H1 (cell line): ENCODE measurements at regions of chr5 and their contacts with region 1.

Region 1: DNA sequence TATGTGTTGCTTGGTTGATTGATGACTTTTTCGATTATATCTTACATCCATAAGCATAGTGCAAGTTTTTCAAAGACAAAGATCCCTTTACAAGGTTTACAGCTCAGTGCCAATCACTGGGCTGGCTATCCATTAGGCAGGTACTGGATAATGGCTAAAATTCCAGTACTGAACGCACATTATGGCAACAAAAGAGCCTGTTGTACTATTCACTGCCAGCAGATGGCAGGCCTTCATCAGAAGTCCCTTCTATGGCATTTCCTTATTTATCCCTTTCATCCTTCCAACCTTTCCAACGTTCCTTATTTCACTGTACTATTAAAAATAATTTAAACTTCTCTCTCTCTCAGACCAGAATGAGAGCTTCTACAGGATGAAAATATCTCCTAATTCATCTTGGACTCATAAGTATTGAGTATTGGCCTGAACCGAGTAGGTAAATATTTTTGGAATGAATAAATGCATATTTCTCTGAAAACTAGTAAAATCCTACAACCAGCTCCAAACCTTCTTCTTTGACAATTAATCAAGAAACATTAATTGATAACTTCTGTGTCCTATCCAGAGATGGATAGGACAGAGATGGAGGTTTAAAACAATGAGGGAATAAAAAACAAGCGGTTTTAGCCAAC is 6.7 kb upstream of the WNT8A start:
- DNase-seq: peak in 1 of 2 experiments; percentile 82
- H3K4me3 ChIP-seq: no peak overlapping the region
- H3K27ac ChIP-seq: no peak overlapping the region
- H3K4me1 ChIP-seq: peaks cover 4 to 10% (median 8%) of the 10 kb centered on the region in 4 experiments; a peak in 4 of 7 replicates
- H3K27me3 ChIP-seq: peaks cover 0 to 2% (median 0%) of the 10 kb centered on the region in 4 experiments; a peak in 1 of 7 replicates
- CTCF ChIP-seq: peak in 2 of 3 experiments; percentile 85 to 87; a peak in 3 of 4 replicates
- EP300 ChIP-seq: no peak; a peak in 1 of 3 replicates
- POLR2A ChIP-seq: no peak
- RAD21 ChIP-seq: peak; percentile 96

Region 2: DNA sequence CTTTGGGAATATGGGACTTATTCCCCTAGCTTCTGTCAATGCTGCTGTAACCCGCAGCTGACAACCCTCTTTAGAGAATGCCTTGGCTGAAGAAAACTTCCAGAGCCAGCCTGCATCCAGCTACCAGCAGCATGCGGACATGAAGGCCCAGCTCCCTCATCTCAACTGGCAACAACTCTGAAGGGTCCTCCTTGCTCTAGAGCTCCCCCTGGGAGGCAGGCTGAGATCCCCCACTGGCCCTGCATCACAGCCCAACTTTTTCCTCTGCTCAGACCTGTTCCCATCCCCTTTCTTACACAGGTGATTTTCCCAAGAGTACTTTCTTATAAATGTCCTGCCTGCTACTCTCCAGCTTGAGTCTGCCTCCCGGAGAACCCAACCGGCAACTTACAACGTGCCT is 12.1 kb before region 1 on chr5:
- CTCF ChIA-PET with region 1: interaction called, 144 read pairs
- POLR2A ChIA-PET with region 1: no interaction called
- DNase-seq: peak; percentile 23 to 79
- H3K4me3 ChIP-seq: no peak overlapping the region
- H3K27ac ChIP-seq: no peak overlapping the region
- H3K4me1 ChIP-seq: no peaks in the 10 kb centered on the region
- H3K27me3 ChIP-seq: no peaks in the 10 kb centered on the region
- CTCF ChIP-seq: peak; percentile 76 to 85 (median 80)
- EP300 ChIP-seq: no peak
- POLR2A ChIP-seq: no peak
- RAD21 ChIP-seq: peak; percentile 53 to 55

Region 3: GRCh38 chr5:138102454-138103318 is 25.5 kb after region 1 on chr5:
- CTCF ChIA-PET with region 1: interaction called, 23 read pairs
- POLR2A ChIA-PET with region 1: no interaction called
- DNase-seq: no peak
- H3K4me3 ChIP-seq: peak overlapping the region in 2 of 4 experiments; percentile 5 to 11; a peak in 3 of 8 replicates
- H3K27ac ChIP-seq: no peak overlapping the region
- H3K4me1 ChIP-seq: peaks cover 0 to 9% (median 3%) of the 10 kb centered on the region in 4 experiments; a peak in 3 of 7 replicates
- H3K27me3 ChIP-seq: peaks cover 7 to 23% (median 9%) of the 10 kb centered on the region in 4 experiments
- CTCF ChIP-seq: no peak
- EP300 ChIP-seq: no peak
- POLR2A ChIP-seq: no peak
- RAD21 ChIP-seq: no peak

Region 4: GRCh38 chr5:138128334-138128733 is 51.2 kb after region 1 on chr5:
- CTCF ChIA-PET with region 1: interaction called, 288 read pairs
- POLR2A ChIA-PET with region 1: interaction called, 3 read pairs
- DNase-seq: no peak
- H3K4me3 ChIP-seq: no peak overlapping the region
- H3K27ac ChIP-seq: no peak overlapping the region
- H3K4me1 ChIP-seq: no peaks in the 10 kb centered on the region; a peak in 1 of 7 replicates
- H3K27me3 ChIP-seq: no peaks in the 10 kb centered on the region
- CTCF ChIP-seq: no peak
- EP300 ChIP-seq: no peak
- POLR2A ChIP-seq: no peak
- RAD21 ChIP-seq: no peak

Region 5: DNA sequence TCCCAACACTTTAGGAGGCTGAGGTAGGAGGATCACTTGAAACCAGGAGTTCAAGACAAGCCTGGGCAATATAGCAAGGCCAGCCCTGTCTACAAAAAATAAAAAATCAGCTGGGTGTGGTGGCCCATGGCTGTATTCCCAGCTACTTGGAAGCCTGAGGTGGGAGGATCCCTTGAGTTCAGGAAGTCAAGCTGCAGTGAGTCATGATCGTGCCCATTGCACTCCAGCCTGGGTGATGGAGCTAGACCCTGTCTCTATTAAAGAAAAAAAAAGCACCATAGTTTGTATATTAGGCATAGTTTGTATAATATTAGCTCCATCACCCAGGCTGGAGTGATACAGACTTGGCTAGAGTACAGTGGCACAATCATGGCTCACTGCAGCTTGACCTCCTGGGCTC is 71.6 kb after region 1 on chr5:
- CTCF ChIA-PET with region 1: interaction called, 24 read pairs
- POLR2A ChIA-PET with region 1: no interaction called
- DNase-seq: no peak
- H3K4me3 ChIP-seq: no peak overlapping the region
- H3K27ac ChIP-seq: no peak overlapping the region
- H3K4me1 ChIP-seq: no peaks in the 10 kb centered on the region
- H3K27me3 ChIP-seq: no peaks in the 10 kb centered on the region
- CTCF ChIP-seq: no peak
- EP300 ChIP-seq: no peak
- POLR2A ChIP-seq: no peak
- RAD21 ChIP-seq: no peak

Region 6: DNA sequence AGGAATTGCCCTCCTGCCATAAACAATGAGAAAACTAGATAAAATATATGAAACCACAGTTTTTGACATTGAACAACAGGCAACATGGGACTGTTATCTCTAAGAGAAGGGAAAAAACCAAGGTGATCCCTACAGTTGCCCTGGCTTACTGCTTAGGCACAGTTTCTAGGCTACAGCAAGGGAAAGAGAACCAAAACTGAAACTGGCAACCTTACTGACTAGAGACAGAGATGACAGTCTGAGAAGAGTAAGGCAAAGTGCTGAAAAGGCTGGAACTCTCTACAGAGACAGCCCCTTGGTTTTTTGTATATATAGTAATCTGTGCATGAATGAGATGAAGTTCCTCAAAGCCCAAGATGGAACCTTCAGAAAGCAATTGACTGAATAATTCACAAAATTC is 325.5 kb after region 1 on chr5:
- CTCF ChIA-PET with region 1: no interaction called
- POLR2A ChIA-PET with region 1: no interaction called
- DNase-seq: no peak
- H3K4me3 ChIP-seq: no peak overlapping the region
- H3K27ac ChIP-seq: no peak overlapping the region
- H3K4me1 ChIP-seq: no peaks in the 10 kb centered on the region
- H3K27me3 ChIP-seq: no peaks in the 10 kb centered on the region
- CTCF ChIP-seq: no peak
- EP300 ChIP-seq: no peak
- POLR2A ChIP-seq: no peak
- RAD21 ChIP-seq: no peak